ENCODE measurements at regions of chr14 and their contacts with region 1.

Region 1: GRCh38 chr14:96603350-96604255 is 101.4 kb downstream of the PAPOLA start:
- DNase-seq: no peak

Region 2: DNA sequence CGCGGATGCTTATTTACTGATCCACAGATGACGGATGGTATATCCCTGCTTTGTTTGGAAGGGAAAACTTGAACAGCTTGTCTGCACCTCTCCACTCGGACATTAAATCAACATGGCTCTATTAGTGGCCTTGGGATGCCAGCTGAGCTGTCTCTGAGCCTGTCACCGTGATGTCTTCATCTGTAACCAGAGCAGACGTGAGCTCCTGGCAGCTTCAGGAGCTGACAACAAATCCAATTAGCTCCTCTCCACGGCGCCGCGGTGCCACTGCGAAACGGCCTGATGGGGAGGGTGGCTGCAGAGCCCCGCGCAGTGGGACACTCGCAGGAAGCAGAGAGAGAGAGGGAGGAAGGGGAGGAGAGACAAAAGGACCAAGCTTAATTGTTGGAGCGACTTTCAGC is 10.9 kb after region 1 on chr14:
- intact Hi-C with region 1: loop called in 1 of 2 experiments (anchors 1 kb)
- DNase-seq: no peak

Measured in posterior vena cava (tissue), 2 donors.